ENCODE measurements at regions of chr14 and their contacts with region 1.

Region 1: DNA sequence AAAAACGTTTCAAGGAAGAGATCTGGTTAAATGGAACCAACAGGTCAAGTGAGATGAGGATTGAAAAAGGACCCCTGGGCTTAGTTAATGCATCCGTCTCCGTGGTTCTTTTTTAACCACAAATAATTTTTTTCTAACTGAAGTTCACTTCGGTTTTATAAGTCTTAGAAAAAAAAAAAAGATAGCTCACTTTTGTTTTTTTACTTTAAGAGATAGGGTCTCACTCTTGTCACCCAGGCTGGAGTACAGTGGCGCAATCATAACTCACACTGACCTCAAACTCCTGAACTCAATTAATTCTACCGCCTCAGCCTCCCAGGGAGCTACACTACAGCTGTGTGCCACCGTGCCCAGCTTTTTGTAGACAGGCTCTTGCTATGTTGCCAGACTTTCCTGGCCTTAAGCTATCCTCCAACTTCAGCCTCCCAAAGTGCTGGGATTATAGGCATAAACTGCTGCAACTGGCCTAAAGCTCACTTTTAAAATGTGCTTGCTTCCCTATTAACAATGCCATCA is 11.8 kb downstream of the HNRNPC start:
- DNase-seq: no peak
- H3K4me3 ChIP-seq: no peak overlapping the region
- H3K27ac ChIP-seq: peak overlapping the region; percentile 10; the same call in 1 of the 2 replicates
- H3K4me1 ChIP-seq: peaks cover 16% of the 10 kb centered on the region; the same call in 1 of the 2 replicates
- H3K27me3 ChIP-seq: no peaks in the 10 kb centered on the region
- CTCF ChIP-seq: no peak

Region 2: GRCh38 chr14:21039585-21040369 is 217.7 kb before region 1 on chr14:
- CTCF ChIA-PET with region 1: no interaction called
- POLR2A ChIA-PET with region 1: no interaction called
- intact Hi-C with region 1: no loop called
- DNase-seq: peak; percentile 22 to 43
- H3K4me3 ChIP-seq: no peak overlapping the region
- H3K27ac ChIP-seq: no peak overlapping the region
- H3K4me1 ChIP-seq: peaks cover 15% of the 10 kb centered on the region
- H3K27me3 ChIP-seq: no peaks in the 10 kb centered on the region
- CTCF ChIP-seq: peak; percentile 57; the same call in 1 of the 2 replicates

Region 3: DNA sequence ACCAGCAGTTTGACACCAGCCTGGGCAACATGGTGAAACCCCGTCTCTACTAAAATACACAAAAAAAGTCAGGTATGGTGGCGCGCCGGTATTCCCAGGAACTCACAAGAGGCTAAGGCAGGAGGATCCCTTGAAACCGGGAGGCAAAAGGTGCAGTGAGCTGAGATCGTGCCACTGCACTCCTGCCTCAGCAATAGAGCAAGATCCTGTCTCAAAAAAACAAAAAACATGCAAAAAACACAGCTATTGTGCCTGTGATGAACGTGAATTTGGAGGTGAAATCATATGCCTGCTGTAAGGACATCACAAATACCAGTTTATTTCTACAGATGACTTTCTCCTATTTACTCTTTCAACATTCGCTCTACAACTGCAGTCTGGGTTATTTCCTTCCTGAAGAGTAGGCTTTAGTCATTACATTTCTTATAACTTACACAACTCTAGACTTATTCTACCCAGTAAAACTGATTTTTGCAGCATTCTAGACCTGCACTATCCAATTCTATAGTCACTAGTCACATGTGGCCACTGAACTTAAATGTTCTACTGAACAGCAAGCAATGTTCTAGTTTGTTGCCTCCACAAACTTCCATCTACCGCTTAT is 36.5 kb before region 1 on chr14:
- CTCF ChIA-PET with region 1: no interaction called
- POLR2A ChIA-PET with region 1: interaction called, 34 read pairs
- intact Hi-C with region 1: no loop called
- DNase-seq: no peak
- H3K4me3 ChIP-seq: no peak overlapping the region
- H3K27ac ChIP-seq: 0 out of 2 replicates have a peak overlapping the region, but pooled peaks have one; percentile 6
- H3K4me1 ChIP-seq: no peaks in the 10 kb centered on the region
- H3K27me3 ChIP-seq: no peaks in the 10 kb centered on the region
- CTCF ChIP-seq: no peak

Region 4: GRCh38 chr14:21269252-21270046 is 12.0 kb after region 1 on chr14 and contains the start of gene HNRNPC:
- CTCF ChIA-PET with region 1: interaction called, 3 read pairs
- POLR2A ChIA-PET with region 1: interaction called, 18 read pairs
- intact Hi-C with region 1: no loop called
- DNase-seq: peak; percentile 99 to 100
- H3K4me3 ChIP-seq: peak within 1 kb of the TSS; percentile 94
- H3K27ac ChIP-seq: peak within 1 kb of the TSS; percentile 81
- H3K4me1 ChIP-seq: peaks cover 27% of the 10 kb centered on the region
- H3K27me3 ChIP-seq: no peaks in the 10 kb centered on the region
- CTCF ChIP-seq: no peak
- total RNA-seq, gene HNRNPC: 486 and 550 TPM in 2 replicates

Measured in PC-9 (cell line).